Heart right ventricle (tissue), 16 donors: ENCODE measurements at regions of chr17 and their contacts with region 1.

Region 1: GRCh38 chr17:47670081-47670480 is 20.4 kb downstream of the KPNB1 start:
- DNase-seq: no peak
- ATAC-seq: no peak
- H3K4me3 ChIP-seq: no peak overlapping the region
- H3K27ac ChIP-seq: peak overlapping the region in 1 of 10 donors; percentile 76
- H3K4me1 ChIP-seq: peaks cover 0 to 14% (median 0%) of the 10 kb centered on the region in 9 donors
- H3K27me3 ChIP-seq: no peaks in the 10 kb centered on the region
- CTCF ChIP-seq: no peak

Region 2: DNA sequence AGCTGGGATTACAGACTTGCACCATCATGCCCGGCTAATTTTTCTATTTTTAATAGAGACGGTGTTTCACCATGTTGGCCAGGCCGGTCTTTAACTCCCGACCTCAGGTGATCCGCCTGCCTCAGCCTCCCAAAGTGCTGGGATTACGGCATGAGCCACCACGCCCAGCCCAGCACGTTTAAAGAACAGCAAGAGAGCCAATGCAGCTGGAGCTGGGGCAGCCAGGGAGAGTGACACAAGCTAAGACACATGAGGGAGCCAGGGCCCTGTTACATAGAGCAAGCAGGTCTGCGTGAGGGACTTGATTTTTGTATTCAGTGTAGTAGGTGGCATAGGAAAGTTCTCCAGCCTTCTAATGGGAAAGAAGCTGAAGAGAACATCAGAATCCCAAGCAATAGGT is 768.8 kb before region 1 on chr17:
- intact Hi-C with region 1: no loop called
- DNase-seq: no peak
- ATAC-seq: no peak
- H3K4me3 ChIP-seq: no peak overlapping the region
- H3K27ac ChIP-seq: no peak overlapping the region
- H3K4me1 ChIP-seq: peaks cover 0 to 6% (median 2%) of the 10 kb centered on the region in 9 donors
- H3K27me3 ChIP-seq: peaks cover 0 to 7% (median 0%) of the 10 kb centered on the region in 7 donors
- CTCF ChIP-seq: no peak

Region 3: GRCh38 chr17:47733047-47733673 is 63.1 kb after region 1 on chr17 and contains the start of gene TBX21:
- intact Hi-C with region 1: loop called in 1 of 10 experiments (anchors 10 kb)
- DNase-seq: peak; percentile 64 to 70
- ATAC-seq: peak; percentile 62 to 85 (median 80)
- H3K4me3 ChIP-seq: peak within 1 kb of the TSS; percentile 5 to 59 (median 45)
- H3K27ac ChIP-seq: peak within 1 kb of the TSS in 1 of 10 donors; percentile 82
- H3K4me1 ChIP-seq: peaks cover 0 to 15% (median 9%) of the 10 kb centered on the region in 9 donors
- H3K27me3 ChIP-seq: peaks cover 14 to 80% (median 57%) of the 10 kb centered on the region in 7 donors
- CTCF ChIP-seq: peak in 8 of 9 donors; percentile 10 to 47 (median 30)
- total RNA-seq, gene TBX21: 0.11 to 2.0 (median 0.29) TPM in 6 of 10 donors, not detected in the others

Region 4: DNA sequence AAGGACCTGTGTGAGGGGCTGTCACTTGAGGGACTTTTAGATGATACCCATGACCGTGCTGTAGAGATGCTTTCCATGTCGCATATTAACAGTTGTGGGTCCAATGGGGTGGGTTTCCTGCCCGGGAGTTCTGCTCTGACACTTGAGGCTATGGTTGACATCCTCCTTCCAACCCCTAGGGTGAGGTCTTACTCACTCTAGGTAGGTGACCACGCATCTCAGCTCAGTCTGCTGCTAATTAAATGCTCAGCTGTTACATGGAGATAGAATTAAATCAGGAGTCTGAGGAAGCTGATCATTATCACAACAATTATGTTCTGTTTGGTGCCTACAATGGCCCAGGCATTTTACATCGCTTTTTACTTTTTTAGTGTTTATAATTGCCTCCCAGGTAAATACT is 111.3 kb after region 1 on chr17:
- intact Hi-C with region 1: no loop called
- DNase-seq: no peak
- ATAC-seq: no peak
- H3K4me3 ChIP-seq: no peak overlapping the region
- H3K27ac ChIP-seq: no peak overlapping the region
- H3K4me1 ChIP-seq: peaks cover 0 to 4% (median 0%) of the 10 kb centered on the region in 9 donors
- H3K27me3 ChIP-seq: peaks cover 11 to 69% (median 63%) of the 10 kb centered on the region in 7 donors
- CTCF ChIP-seq: no peak

Region 5: GRCh38 chr17:47882247-47882646 is 212.2 kb after region 1 on chr17:
- intact Hi-C with region 1: no loop called
- DNase-seq: no peak
- ATAC-seq: peak in 6 of 8 donors; percentile 13 to 53 (median 36)
- H3K4me3 ChIP-seq: peak overlapping the region in 2 of 10 donors; percentile 19
- H3K27ac ChIP-seq: peak overlapping the region in 4 of 10 donors; percentile 15 to 50 (median 24)
- H3K4me1 ChIP-seq: peaks cover 0 to 31% (median 5%) of the 10 kb centered on the region in 9 donors
- H3K27me3 ChIP-seq: peaks cover 0 to 16% (median 4%) of the 10 kb centered on the region in 7 donors
- CTCF ChIP-seq: no peak